ENCODE measurements at regions of chr11 and their contacts with region 1.

Region 1: DNA sequence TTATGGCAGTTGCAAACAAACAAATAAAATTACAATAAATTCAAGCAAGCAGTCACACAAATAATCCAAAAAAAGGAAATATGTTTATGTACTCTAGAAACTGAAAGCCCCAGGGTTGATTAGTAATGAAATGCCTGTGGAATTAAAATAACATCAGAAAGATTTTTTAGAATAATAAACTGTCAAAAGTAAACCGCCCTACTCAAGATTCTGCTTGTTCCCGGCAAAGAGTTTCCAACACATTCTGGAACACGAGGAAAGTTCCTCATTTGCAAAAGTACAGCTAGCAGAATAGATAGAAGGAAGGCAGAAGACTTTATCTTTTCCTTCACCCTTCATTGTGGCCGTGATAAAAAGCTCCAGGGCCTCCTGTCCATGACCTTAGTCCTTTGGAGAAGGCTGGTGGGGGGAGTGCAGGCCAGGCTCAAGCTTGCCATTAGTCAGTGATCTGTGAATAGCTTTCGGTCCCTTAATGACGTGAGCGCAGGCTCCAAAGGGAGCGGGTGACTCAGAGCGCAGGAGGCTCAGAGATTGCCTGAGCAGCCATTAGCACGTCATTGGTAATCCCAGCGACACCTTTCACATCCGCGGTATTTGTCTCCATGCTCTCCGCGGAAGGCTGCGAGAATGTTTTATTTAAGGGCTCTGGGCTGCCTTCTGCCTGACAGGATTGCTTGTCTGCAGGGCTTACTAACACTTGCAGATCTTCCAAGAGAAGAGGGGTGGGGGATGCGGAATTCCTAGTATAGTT is 458.3 kb downstream of the METTL15 start:
- DNase-seq: no peak
- H3K4me3 Mint-ChIP-seq: no peak overlapping the region
- H3K27ac Mint-ChIP-seq: no peak overlapping the region
- H3K4me1 Mint-ChIP-seq: no peaks in the 10 kb centered on the region
- H3K27me3 Mint-ChIP-seq: no peaks in the 10 kb centered on the region

Region 2: GRCh38 chr11:29075726-29076125 is 509.2 kb after region 1 on chr11:
- CTCF ChIA-PET with region 1: no interaction called
- POLR2A ChIA-PET with region 1: no interaction called
- intact Hi-C with region 1: loop called (anchors 10 kb)
- DNase-seq: no peak
- H3K4me3 Mint-ChIP-seq: no peak overlapping the region
- H3K27ac Mint-ChIP-seq: no peak overlapping the region
- H3K4me1 Mint-ChIP-seq: no peaks in the 10 kb centered on the region
- H3K27me3 Mint-ChIP-seq: no peaks in the 10 kb centered on the region